ENCODE measurements at regions of chr20 and their contacts with region 1.

Region 1: GRCh38 chr20:48921151-48921898 is at the start of gene ARFGEF2:
- DNase-seq: peak; percentile 95
- ATAC-seq: peak; percentile 95
- H3K4me3 Mint-ChIP-seq: peak within 1 kb of the TSS; percentile 96
- H3K27ac Mint-ChIP-seq: peak within 1 kb of the TSS; percentile 96
- H3K4me1 Mint-ChIP-seq: peaks cover 45% of the 10 kb centered on the region
- H3K27me3 Mint-ChIP-seq: no peaks in the 10 kb centered on the region
- total RNA-seq, gene ARFGEF2: 19.3 to 20.5 TPM

Region 2: DNA sequence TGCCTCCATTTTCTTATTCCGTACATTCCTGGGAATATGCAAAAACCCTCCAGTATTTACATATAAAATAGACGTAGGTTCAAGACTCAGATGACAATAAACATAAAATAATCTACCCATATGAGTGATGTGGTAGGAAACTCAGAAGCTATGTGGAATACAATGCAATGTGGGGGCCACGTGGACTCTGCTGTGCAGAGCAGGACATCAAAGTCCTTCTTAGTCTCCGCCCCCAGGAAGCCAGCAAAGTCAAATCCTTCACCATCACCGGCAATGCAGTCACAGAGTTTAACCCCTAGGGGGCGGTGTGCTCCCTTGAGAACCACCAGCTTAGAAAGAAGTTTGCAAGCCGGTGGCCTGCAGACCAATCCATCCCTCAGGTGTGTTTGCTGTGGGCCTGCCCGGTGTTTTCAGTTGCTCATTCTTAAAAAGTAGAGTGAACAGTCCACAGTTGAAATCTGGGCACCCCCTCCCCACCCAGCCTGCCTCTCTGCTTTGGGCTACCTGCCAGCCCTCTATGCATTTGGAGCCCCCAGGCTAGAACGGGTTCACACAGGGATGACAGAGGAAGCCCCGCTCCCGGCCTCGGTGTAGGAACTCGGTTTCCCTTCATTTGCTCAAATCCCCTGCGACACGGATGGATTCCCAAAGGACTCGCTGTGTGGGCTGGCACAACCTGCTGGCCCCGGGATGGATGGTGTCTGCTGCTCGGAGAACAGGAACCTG is 1195.9 kb before region 1 on chr20:
- CTCF ChIA-PET with region 1: no interaction called
- POLR2A ChIA-PET with region 1: no interaction called
- intact Hi-C with region 1: loop called in 1 of 2 experiments (anchors 1 kb)
- DNase-seq: peak; percentile 90
- ATAC-seq: peak; percentile 72
- H3K4me3 Mint-ChIP-seq: no peak overlapping the region
- H3K27ac Mint-ChIP-seq: peak overlapping the region; percentile 63
- H3K4me1 Mint-ChIP-seq: peaks cover 29% of the 10 kb centered on the region
- H3K27me3 Mint-ChIP-seq: no peaks in the 10 kb centered on the region

Region 3: GRCh38 chr20:48760403-48760983 is 160.8 kb before region 1 on chr20:
- CTCF ChIA-PET with region 1: interaction called, 3 read pairs
- POLR2A ChIA-PET with region 1: no interaction called
- intact Hi-C with region 1: loop called in 1 of 2 experiments (anchors 2 kb)
- DNase-seq: peak; percentile 78
- ATAC-seq: peak; percentile 87
- H3K4me3 Mint-ChIP-seq: peak overlapping the region; percentile 34
- H3K27ac Mint-ChIP-seq: peak overlapping the region; percentile 96
- H3K4me1 Mint-ChIP-seq: peaks cover 67% of the 10 kb centered on the region
- H3K27me3 Mint-ChIP-seq: no peaks in the 10 kb centered on the region

Region 4: DNA sequence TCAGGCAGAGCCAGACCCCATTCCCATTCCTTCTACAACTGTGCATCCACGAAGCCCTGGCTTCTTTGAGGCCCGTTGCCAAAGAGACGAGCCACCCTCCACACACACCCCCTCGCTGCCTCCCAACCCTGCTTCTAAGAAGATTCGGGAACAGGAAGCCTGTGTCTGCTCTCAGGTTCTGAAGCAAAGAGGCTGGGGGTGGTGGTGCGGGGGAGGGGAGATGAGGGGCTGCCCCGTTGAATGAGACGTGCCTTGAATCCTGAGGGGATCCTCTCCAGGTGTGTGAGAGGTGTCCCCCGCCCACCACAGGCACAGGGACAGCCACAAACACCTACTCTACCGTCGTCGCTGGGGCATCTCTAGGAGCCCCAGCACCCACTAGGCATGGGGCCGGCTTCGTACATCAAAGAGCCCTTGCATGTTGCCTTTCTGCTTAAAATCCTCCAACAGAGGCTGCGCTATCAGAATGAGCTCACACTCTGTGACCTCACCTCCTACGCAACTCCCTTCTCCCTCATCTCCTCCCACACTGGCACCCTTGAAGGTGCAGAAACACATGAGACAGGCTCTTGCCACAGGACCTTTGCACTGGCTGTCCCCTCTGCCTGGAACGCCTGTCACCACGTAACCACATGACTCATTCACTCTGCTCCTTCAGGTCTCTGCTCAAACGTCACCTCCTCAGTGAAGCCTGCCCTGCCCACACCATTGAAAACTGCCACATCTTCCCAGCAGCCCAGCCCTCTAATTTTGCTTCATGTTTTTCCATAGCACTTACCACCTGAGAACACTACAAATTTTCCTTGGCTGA is 152.1 kb before region 1 on chr20:
- CTCF ChIA-PET with region 1: no interaction called
- POLR2A ChIA-PET with region 1: no interaction called
- intact Hi-C with region 1: loop called in 1 of 2 experiments (anchors 1 kb)
- DNase-seq: peak; percentile 96
- ATAC-seq: peak; percentile 90
- H3K4me3 Mint-ChIP-seq: peak overlapping the region; percentile 48
- H3K27ac Mint-ChIP-seq: peak overlapping the region; percentile 81
- H3K4me1 Mint-ChIP-seq: peaks cover 80% of the 10 kb centered on the region
- H3K27me3 Mint-ChIP-seq: no peaks in the 10 kb centered on the region

Region 5: GRCh38 chr20:48787861-48788375 is 133.4 kb before region 1 on chr20:
- CTCF ChIA-PET with region 1: no interaction called
- POLR2A ChIA-PET with region 1: no interaction called
- intact Hi-C with region 1: loop called in 1 of 2 experiments (anchors 5 kb)
- DNase-seq: no peak
- ATAC-seq: no peak
- H3K4me3 Mint-ChIP-seq: no peak overlapping the region
- H3K27ac Mint-ChIP-seq: peak overlapping the region; percentile 16
- H3K4me1 Mint-ChIP-seq: peaks cover 58% of the 10 kb centered on the region
- H3K27me3 Mint-ChIP-seq: no peaks in the 10 kb centered on the region

Region 6: GRCh38 chr20:48858075-48858790 is 63.1 kb before region 1 on chr20:
- CTCF ChIA-PET with region 1: no interaction called
- POLR2A ChIA-PET with region 1: no interaction called
- intact Hi-C with region 1: no loop called
- DNase-seq: no peak
- ATAC-seq: no peak
- H3K4me3 Mint-ChIP-seq: no peak overlapping the region
- H3K27ac Mint-ChIP-seq: no peak overlapping the region
- H3K4me1 Mint-ChIP-seq: no peaks in the 10 kb centered on the region
- H3K27me3 Mint-ChIP-seq: no peaks in the 10 kb centered on the region

Region 7: DNA sequence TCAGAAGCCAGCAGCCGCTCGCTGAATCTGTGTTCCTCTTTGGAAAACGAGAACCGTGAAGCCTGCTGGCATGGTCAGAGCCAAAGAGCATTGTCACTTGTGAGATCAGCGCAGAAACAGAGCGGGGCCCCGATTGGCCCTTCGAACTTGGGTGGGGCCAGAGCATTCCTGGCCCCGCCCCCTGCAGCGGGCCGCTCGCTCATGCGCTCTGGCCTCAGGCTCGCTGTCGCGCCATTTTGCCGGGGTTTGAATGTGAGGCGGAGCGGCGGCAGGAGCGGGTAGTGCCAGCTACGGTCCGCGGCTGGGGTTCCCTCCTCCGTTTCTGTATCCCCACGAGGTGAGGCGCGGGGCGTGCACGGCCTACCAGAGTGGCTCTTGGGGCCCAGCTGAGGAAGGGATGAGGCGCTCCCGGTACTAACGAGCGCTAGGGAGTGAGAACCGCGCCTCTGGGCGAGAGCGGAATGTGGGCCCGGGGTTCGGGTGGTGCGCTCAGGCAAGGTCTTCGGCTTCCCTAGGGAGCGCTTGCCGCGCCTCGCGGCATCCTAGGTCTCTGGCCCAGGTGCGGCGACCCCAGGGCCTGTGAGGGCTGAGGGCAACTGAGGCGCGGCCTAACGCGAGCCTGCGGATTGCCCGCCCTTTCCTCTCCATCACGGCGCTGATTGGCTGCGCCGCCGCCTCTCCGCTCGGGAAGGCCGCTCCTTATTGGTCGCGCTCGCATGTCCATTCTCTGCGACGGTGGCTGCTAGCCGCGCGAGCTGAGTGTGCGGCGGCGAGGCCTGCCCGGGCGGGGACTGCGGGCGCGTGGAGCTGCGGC is 125.0 kb after region 1 on chr20 and contains the start of gene CSE1L:
- CTCF ChIA-PET with region 1: interaction called, 3 read pairs
- POLR2A ChIA-PET with region 1: no interaction called
- intact Hi-C with region 1: loop called (anchors 1 to 5 kb)
- DNase-seq: peak; percentile 97
- ATAC-seq: peak; percentile 92
- H3K4me3 Mint-ChIP-seq: peak within 1 kb of the TSS; percentile 97
- H3K27ac Mint-ChIP-seq: peak within 1 kb of the TSS; percentile 99
- H3K4me1 Mint-ChIP-seq: peaks cover 30% of the 10 kb centered on the region
- H3K27me3 Mint-ChIP-seq: no peaks in the 10 kb centered on the region
- total RNA-seq, gene CSE1L: 119 to 126 TPM

Region 8: DNA sequence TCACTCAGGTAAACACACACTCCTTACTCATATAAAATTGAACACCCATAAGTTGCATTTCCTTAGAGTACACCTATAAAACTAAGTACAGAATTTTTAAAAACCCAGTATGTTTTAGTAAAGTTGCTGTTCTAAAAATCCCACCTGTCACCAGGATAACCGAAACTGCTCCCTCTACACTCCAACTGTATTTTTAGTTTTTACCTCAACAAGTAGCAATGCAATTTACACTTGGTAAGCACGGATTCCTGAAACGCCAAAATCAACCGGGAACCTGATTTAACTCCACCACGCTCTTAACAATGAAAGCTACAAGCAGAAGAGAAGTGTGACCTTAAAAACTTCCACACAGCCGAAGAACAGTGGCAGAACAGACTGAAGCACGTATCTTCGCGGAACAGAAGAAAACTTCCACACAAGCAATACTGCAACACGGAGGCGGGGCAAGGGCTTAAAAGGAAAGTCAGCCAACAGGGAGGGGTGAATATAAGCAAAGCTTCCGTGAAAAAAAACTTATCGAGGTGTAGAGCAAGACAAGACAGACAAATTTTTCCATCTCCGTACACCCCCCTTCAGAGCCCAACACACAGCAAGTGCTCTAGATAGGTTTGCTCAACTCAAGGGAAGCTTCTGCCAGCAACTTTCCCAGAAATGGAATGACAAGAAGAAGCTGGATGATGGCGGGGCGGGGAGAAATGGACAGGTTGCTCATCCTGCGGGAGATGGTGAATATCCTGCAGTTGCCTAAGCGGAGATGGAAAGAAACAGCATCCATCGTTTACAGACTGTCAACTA is 265.4 kb after region 1 on chr20:
- CTCF ChIA-PET with region 1: interaction called, 3 read pairs
- POLR2A ChIA-PET with region 1: no interaction called
- intact Hi-C with region 1: loop called in 1 of 2 experiments (anchors 1 kb)
- DNase-seq: peak; percentile 85
- ATAC-seq: peak; percentile 49
- H3K4me3 Mint-ChIP-seq: peak overlapping the region; percentile 96
- H3K27ac Mint-ChIP-seq: peak overlapping the region; percentile 89
- H3K4me1 Mint-ChIP-seq: peaks cover 51% of the 10 kb centered on the region
- H3K27me3 Mint-ChIP-seq: no peaks in the 10 kb centered on the region